Activated CD8-positive, alpha-beta memory T cell treated with anti-CD3 and anti-CD28 coated beads, Interleukin-2, amount 10 ng/mL, durations not matched to agents 7 days and 5 days (primary cell): ENCODE measurements at regions of chr19 and their contacts with region 1.

Region 1: DNA sequence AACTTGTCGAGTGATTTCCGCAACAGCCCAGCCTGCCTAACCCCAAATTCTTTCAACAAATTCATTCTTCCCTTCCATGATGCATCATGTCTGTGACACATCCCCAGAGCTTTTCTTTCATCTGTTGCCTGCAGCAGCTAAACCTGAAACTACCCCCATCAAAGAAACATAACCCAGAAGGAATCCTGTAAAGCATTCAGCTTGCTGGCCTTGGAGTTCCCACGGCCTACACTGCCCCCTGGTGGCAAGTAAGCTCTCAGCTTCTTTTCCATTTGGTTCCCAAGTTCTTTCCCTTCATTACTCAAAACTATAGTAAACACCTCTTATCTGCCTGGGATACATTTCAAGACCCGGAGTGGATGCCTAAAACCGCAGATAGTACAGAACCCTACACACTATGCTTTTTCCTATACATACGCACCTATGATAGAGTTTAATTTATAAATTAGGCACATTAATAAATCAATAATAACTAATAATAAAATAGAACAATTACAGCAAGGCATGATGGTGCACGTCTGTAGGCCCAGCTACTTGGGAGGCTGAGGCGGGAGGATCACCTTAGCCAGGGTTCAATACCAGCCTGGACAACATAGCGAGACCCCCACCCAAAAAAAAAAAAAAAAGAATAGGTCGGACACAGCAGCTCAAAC is 7.4 kb downstream of the ETHE1 start:
- DNase-seq: peak; percentile 81
- ATAC-seq: peak; percentile 49
- H3K4me3 Mint-ChIP-seq: no peak overlapping the region
- H3K27ac Mint-ChIP-seq: no peak overlapping the region
- H3K4me1 Mint-ChIP-seq: peaks cover 13% of the 10 kb centered on the region
- H3K27me3 Mint-ChIP-seq: no peaks in the 10 kb centered on the region

Region 2: GRCh38 chr19:43395561-43395960 is 124.0 kb before region 1 on chr19:
- CTCF ChIA-PET with region 1: no interaction called
- DNase-seq: no peak
- ATAC-seq: no peak
- H3K4me3 Mint-ChIP-seq: no peak overlapping the region
- H3K27ac Mint-ChIP-seq: no peak overlapping the region
- H3K4me1 Mint-ChIP-seq: no peaks in the 10 kb centered on the region
- H3K27me3 Mint-ChIP-seq: peaks cover 22% of the 10 kb centered on the region

Region 3: GRCh38 chr19:43416951-43417623 is 102.5 kb before region 1 on chr19:
- CTCF ChIA-PET with region 1: no interaction called
- DNase-seq: no peak
- ATAC-seq: no peak
- H3K4me3 Mint-ChIP-seq: no peak overlapping the region
- H3K27ac Mint-ChIP-seq: no peak overlapping the region
- H3K4me1 Mint-ChIP-seq: no peaks in the 10 kb centered on the region
- H3K27me3 Mint-ChIP-seq: peaks cover 9% of the 10 kb centered on the region

Region 4: GRCh38 chr19:43438291-43439096 is 81.1 kb before region 1 on chr19:
- CTCF ChIA-PET with region 1: interaction called, 274 read pairs
- DNase-seq: no peak
- ATAC-seq: no peak
- H3K4me3 Mint-ChIP-seq: peak overlapping the region; percentile 36
- H3K27ac Mint-ChIP-seq: peak overlapping the region; percentile 78
- H3K4me1 Mint-ChIP-seq: peaks cover 21% of the 10 kb centered on the region
- H3K27me3 Mint-ChIP-seq: no peaks in the 10 kb centered on the region

Region 5: DNA sequence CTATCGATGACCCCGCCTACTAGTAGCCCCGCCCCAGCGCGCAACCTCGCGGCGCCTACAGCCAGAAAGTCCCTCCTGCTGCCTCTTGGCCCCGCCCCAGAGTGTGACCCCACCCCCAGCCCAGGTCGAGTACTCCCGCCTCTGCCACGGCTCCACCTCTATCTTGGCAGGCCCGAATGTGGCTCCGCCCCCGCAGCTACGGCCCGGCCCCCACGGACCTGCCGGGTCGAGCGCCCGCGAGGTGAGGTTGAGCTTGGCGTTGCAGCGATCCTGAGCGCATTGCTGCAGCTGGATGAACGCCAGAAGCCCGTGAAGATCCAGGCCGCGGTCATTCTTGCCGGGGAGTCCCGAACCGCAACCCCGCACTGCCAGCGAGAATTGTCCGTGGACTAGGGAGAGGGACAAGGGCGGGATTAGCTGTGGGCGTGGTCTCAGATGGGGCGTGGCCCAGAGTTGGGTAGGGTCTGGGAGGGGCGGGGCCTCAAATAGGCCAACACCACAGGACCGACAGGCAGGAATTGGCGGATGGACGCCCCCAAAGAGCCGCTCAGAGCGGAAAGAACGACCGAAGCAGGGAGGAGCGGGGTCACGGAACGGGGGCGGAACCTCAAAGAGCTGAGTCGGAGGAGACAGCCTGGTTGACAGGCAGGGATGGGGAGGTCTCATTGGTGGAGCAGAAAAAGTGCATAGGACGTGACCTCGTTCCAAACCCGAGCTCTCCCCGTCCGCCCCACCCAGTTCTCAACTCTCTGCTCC is 56.0 kb before region 1 on chr19:
- CTCF ChIA-PET with region 1: interaction called, 21 read pairs
- DNase-seq: peak; percentile 99
- ATAC-seq: peak; percentile 92
- H3K4me3 Mint-ChIP-seq: peak overlapping the region; percentile 90
- H3K27ac Mint-ChIP-seq: peak overlapping the region; percentile 90
- H3K4me1 Mint-ChIP-seq: peaks cover 27% of the 10 kb centered on the region
- H3K27me3 Mint-ChIP-seq: peaks cover 4% of the 10 kb centered on the region

Region 6: GRCh38 chr19:43503501-43504425 is 15.8 kb before region 1 on chr19:
- CTCF ChIA-PET with region 1: interaction called, 28 read pairs
- DNase-seq: peak; percentile 99
- ATAC-seq: peak; percentile 95
- H3K4me3 Mint-ChIP-seq: peak overlapping the region; percentile 97
- H3K27ac Mint-ChIP-seq: peak overlapping the region; percentile 91
- H3K4me1 Mint-ChIP-seq: peaks cover 21% of the 10 kb centered on the region
- H3K27me3 Mint-ChIP-seq: no peaks in the 10 kb centered on the region

Region 7: DNA sequence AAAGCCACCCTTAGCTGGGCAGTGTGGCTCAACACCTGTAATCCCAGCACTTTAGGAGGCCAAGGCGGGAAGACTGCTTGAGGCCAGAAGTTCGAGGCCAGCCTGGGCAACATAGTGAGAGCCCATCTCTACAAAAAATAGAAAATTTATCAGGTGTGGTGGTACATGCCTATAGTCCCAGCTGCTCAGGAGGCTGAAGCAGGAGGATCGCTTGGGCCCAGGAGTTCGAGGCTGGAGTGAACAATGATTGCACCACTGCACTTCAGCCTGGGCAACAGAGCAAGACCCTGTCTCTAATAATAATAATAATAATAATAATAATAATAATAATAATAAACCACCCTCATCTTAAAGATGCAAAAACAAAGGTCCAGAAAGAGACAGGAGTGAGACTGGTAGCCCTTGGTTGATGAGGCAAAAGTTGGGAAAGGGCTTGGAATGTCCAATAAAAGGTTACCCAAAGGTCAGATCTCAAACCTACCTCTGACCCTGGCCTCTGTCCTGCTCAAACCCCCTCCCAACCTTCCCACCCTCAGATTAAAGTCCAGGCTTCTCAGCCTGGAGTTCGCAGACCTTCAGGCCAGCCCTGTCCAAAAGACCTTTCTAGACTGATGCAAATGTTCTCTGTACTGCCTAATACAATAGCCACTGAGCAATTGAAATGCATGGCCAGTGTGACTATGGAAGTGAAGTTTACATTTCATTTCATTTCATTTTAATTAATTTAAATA is 22.5 kb after region 1 on chr19:
- CTCF ChIA-PET with region 1: no interaction called
- DNase-seq: no peak
- ATAC-seq: no peak
- H3K4me3 Mint-ChIP-seq: no peak overlapping the region
- H3K27ac Mint-ChIP-seq: no peak overlapping the region
- H3K4me1 Mint-ChIP-seq: no peaks in the 10 kb centered on the region
- H3K27me3 Mint-ChIP-seq: no peaks in the 10 kb centered on the region

Region 8: GRCh38 chr19:43555185-43555770 is 35.7 kb after region 1 on chr19:
- CTCF ChIA-PET with region 1: interaction called, 14 read pairs
- DNase-seq: peak; percentile 89
- ATAC-seq: peak; percentile 94
- H3K4me3 Mint-ChIP-seq: no peak overlapping the region
- H3K27ac Mint-ChIP-seq: peak overlapping the region; percentile 61
- H3K4me1 Mint-ChIP-seq: peaks cover 11% of the 10 kb centered on the region
- H3K27me3 Mint-ChIP-seq: no peaks in the 10 kb centered on the region

Region 9: GRCh38 chr19:43619262-43620060 is 99.9 kb after region 1 on chr19 and contains the start of gene ZNF428:
- CTCF ChIA-PET with region 1: no interaction called
- DNase-seq: peak; percentile 90
- ATAC-seq: peak; percentile 91
- H3K4me3 Mint-ChIP-seq: peak within 1 kb of the TSS; percentile 89
- H3K27ac Mint-ChIP-seq: peak within 1 kb of the TSS; percentile 94
- H3K4me1 Mint-ChIP-seq: peaks cover 24% of the 10 kb centered on the region
- H3K27me3 Mint-ChIP-seq: no peaks in the 10 kb centered on the region
- total RNA-seq, gene ZNF428: 23.0 to 23.2 TPM